ENCODE measurements at regions of chr12 and their contacts with region 1.

Region 1: DNA sequence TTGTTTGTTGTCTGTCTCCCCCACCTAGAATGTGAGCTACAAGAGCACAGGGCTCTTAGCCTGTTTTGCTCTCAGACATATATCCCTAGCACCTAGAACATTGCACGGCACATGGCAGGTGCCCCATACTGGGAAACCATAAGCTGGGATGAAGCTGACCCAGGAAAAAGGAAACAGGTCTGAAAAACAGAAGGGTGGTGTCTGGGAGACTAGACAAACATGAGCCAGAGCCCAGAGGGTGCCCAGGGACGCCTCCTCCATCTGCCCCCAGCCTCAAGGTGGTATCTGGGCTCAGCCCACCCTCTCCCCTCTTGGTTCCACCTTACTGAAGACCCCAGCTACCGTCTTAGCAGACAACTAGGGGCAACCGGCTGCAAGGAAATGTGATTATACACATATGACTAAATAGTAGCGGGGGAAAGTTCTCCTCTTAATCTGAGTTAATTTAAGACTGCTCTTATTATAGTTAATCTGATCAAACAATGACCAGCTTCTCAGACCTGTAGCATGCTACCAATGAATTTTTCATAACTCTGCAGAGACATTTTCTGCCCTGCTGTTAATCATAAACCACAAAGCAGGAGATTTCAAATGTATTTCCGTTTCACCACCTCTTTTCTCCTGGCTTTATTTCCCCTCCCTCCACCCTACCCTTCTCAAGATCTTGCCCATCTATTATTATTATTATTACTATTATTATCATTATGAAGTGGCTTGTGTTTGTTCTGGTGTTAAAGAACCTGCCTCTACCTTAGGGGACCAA is 31.9 kb downstream of the KSR2 start:
- DNase-seq: no peak
- H3K4me3 ChIP-seq: no peak overlapping the region
- H3K27ac ChIP-seq: no peak overlapping the region
- H3K4me1 ChIP-seq: no peaks in the 10 kb centered on the region
- H3K27me3 ChIP-seq: no peaks in the 10 kb centered on the region
- CTCF ChIP-seq: no peak
- POLR2A ChIP-seq: no peak

Region 2: GRCh38 chr12:117240081-117240755 is 696.7 kb before region 1 on chr12:
- intact Hi-C with region 1: loop called (anchors 5 kb)
- DNase-seq: no peak
- H3K4me3 ChIP-seq: no peak overlapping the region
- H3K27ac ChIP-seq: no peak overlapping the region
- H3K4me1 ChIP-seq: no peaks in the 10 kb centered on the region
- H3K27me3 ChIP-seq: no peaks in the 10 kb centered on the region
- CTCF ChIP-seq: no peak
- POLR2A ChIP-seq: no peak

Region 3: DNA sequence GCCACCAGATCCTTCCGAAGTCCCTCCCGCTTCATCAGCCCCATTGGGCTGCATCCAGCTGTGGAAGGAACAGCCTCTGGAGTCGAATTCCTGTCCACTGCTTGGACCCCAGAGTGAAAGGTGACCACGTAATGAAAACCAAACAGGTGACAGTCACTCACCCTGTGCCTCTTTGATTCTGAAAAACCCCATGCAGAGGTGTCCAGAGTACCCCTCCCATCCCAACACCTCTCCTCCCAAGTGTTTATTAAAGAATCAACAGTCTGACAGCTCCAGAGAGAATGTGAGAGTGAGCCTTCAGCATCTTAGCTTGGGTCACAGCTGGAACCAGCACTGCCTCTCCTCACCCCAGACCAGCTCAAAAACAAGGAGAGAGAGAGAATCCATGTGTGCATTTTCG is 396.9 kb before region 1 on chr12:
- intact Hi-C with region 1: loop called (anchors 5 kb)
- DNase-seq: no peak
- H3K4me3 ChIP-seq: no peak overlapping the region
- H3K27ac ChIP-seq: no peak overlapping the region
- H3K4me1 ChIP-seq: no peaks in the 10 kb centered on the region
- H3K27me3 ChIP-seq: no peaks in the 10 kb centered on the region
- CTCF ChIP-seq: no peak
- POLR2A ChIP-seq: no peak